Heart left ventricle (tissue), 16 donors: ENCODE measurements at regions of chr5 and their contacts with region 1.

Region 1: GRCh38 chr5:139262742-139263445 is 30.6 kb upstream of the MATR3 start:
- DNase-seq: peak; percentile 87 to 92 (median 89)
- ATAC-seq: peak; percentile 97 to 99 (median 98)
- H3K4me3 ChIP-seq: no peak overlapping the region
- H3K27ac ChIP-seq: peak overlapping the region in 10 of 12 donors; percentile 21 to 68 (median 30)
- H3K4me1 ChIP-seq: peaks cover 0 to 21% (median 12%) of the 10 kb centered on the region in 12 donors
- H3K27me3 ChIP-seq: no peaks in the 10 kb centered on the region
- CTCF ChIP-seq: peak; percentile 71 to 97 (median 92)
- POLR2A ChIP-seq: no peak

Region 2: GRCh38 chr5:138583984-138584637 is 678.8 kb before region 1 on chr5:
- intact Hi-C with region 1: loop called in 9 of 10 experiments (anchors 2 to 10 kb)
- DNase-seq: no peak
- ATAC-seq: no peak
- H3K4me3 ChIP-seq: no peak overlapping the region
- H3K27ac ChIP-seq: no peak overlapping the region
- H3K4me1 ChIP-seq: peaks cover 0 to 6% (median 0%) of the 10 kb centered on the region in 12 donors
- H3K27me3 ChIP-seq: no peaks in the 10 kb centered on the region
- CTCF ChIP-seq: no peak
- POLR2A ChIP-seq: no peak

Region 3: GRCh38 chr5:138641547-138642298 is 621.2 kb before region 1 on chr5:
- intact Hi-C with region 1: loop called (anchors 2 to 10 kb)
- DNase-seq: peak; percentile 59 to 84 (median 61)
- ATAC-seq: peak in 3 of 4 donors; percentile 56 to 77 (median 75)
- H3K4me3 ChIP-seq: no peak overlapping the region
- H3K27ac ChIP-seq: no peak overlapping the region
- H3K4me1 ChIP-seq: peaks cover 0 to 6% (median 0%) of the 10 kb centered on the region in 12 donors
- H3K27me3 ChIP-seq: peaks cover 0 to 4% (median 0%) of the 10 kb centered on the region in 9 donors
- CTCF ChIP-seq: peak; percentile 62 to 83 (median 76)
- POLR2A ChIP-seq: no peak

Region 4: GRCh38 chr5:138824924-138825863 is 437.7 kb before region 1 on chr5:
- intact Hi-C with region 1: loop called in 4 of 10 experiments (anchors 5 to 10 kb)
- DNase-seq: no peak
- ATAC-seq: peak in 2 of 4 donors; percentile 61 to 67
- H3K4me3 ChIP-seq: no peak overlapping the region
- H3K27ac ChIP-seq: peak overlapping the region in 4 of 12 donors; percentile 18 to 45 (median 34)
- H3K4me1 ChIP-seq: peaks cover 4 to 54% (median 30%) of the 10 kb centered on the region in 12 donors
- H3K27me3 ChIP-seq: no peaks in the 10 kb centered on the region
- CTCF ChIP-seq: peak; percentile 45 to 73 (median 68)
- POLR2A ChIP-seq: no peak